Naive thymus-derived CD4-positive, alpha-beta T cell (primary cell): ENCODE measurements at regions of chr14 and their contacts with region 1.

Region 1: GRCh38 chr14:50830932-50831725 is at the start of gene NIN:
- DNase-seq: peak; percentile 58 to 80 (median 74)
- ATAC-seq: peak; percentile 91
- H3K4me3 ChIP-seq: peak within 1 kb of the TSS; percentile 80
- H3K4me3 Mint-ChIP-seq: peak within 1 kb of the TSS; percentile 91 to 99 (median 96)
- H3K27ac ChIP-seq: peak within 1 kb of the TSS; percentile 84
- H3K27ac Mint-ChIP-seq: peak within 1 kb of the TSS; percentile 85 to 99 (median 95)
- H3K4me1 ChIP-seq: peaks cover 40 to 42% of the 10 kb centered on the region in 2 donors
- H3K4me1 Mint-ChIP-seq: peaks cover 46 to 84% (median 74%) of the 10 kb centered on the region in 7 donors
- H3K27me3 ChIP-seq: no peaks in the 10 kb centered on the region
- H3K27me3 Mint-ChIP-seq: peaks cover 0 to 13% (median 0%) of the 10 kb centered on the region in 5 donors
- total RNA-seq, gene NIN: 84.5 to 149 (median 128) TPM

Region 2: DNA sequence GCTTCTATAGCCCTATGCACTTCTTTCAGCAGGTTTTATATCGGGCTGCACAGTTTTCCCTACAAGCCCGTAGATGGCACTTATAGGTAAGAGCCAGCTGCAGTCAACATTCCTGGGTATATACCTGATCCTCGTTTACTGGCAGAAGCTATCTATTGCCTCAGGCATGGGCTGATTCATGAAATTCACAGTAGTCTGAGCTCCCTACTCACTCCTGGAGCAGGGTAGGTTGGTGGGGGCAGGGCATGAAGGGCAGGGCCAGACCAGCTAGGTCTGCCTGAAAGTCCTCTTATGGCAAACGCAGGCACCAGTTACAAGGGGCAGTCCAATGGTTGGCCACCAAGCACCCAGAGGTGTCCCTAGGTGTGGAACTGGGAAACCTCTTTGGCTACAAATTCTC is 1590.7 kb before region 1 on chr14:
- CTCF ChIA-PET with region 1: no interaction called
- POLR2A ChIA-PET with region 1: no interaction called
- intact Hi-C with region 1: no loop called
- DNase-seq: no peak
- ATAC-seq: no peak
- H3K4me3 ChIP-seq: no peak overlapping the region
- H3K4me3 Mint-ChIP-seq: no peak overlapping the region
- H3K27ac ChIP-seq: no peak overlapping the region
- H3K27ac Mint-ChIP-seq: no peak overlapping the region
- H3K4me1 ChIP-seq: no peaks in the 10 kb centered on the region
- H3K4me1 Mint-ChIP-seq: no peaks in the 10 kb centered on the region
- H3K27me3 ChIP-seq: no peaks in the 10 kb centered on the region
- H3K27me3 Mint-ChIP-seq: peaks cover 0 to 25% (median 10%) of the 10 kb centered on the region in 5 donors

Region 3: DNA sequence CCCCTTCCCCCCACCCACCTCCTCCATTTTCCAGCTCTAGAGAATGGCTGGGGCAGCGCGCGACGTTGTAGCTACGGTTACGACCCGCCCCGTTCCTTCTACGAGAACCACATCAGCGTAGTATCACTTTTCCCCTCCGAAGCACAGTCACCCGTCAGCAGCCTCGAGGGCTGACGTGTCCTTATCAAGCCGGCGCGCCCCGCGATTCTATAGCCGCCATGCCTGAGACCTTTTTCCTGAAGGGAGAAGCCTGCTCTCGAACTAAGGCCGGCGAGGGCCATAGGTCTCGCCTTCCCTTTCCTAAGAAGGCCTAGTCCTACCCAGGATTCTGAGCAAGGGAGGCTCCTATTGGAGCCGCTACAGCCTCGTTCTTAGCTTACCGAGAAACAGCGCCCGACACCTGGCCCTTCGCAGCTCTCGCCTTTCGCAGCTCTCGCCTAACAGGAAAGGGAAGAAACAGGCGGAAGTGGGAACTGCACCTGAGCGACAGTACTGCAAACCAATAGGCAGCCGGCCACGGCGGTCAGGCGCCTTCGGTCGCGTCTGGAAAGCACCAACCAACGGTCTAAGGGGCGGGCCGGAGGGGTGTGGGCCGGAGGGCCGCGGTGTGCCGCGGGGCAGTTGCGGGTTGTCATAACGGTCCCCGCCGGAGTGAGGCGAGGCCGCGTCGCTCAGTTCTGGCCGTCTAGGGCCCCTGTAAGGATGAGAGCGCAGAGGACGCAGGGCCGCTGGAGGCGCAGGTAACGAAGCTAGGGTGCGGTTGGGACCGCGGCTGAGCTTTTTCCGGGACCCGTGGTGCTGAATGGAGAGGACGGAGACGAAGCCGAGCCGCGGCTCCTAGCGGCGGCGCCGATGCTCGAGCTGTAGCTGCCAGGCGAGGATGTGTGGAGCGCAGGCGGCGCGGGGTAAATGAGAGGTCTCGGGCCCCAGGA is 1210.7 kb before region 1 on chr14 and contains the starts of genes MGAT2 and RPL36AL:
- CTCF ChIA-PET with region 1: no interaction called
- POLR2A ChIA-PET with region 1: no interaction called
- intact Hi-C with region 1: loop called (anchors 5 kb)
- DNase-seq: peak; percentile 89 to 95 (median 94)
- ATAC-seq: peak; percentile 92
- H3K4me3 ChIP-seq: peak within 1 kb of the TSS; percentile 98
- H3K4me3 Mint-ChIP-seq: peak within 1 kb of the TSS; percentile 94 to 99 (median 98)
- H3K27ac ChIP-seq: peak within 1 kb of the TSS; percentile 97
- H3K27ac Mint-ChIP-seq: peak within 1 kb of the TSS; percentile 95 to 100 (median 99)
- H3K4me1 ChIP-seq: peaks cover 40 to 42% of the 10 kb centered on the region in 2 donors
- H3K4me1 Mint-ChIP-seq: peaks cover 36 to 75% (median 56%) of the 10 kb centered on the region in 7 donors
- H3K27me3 ChIP-seq: no peaks in the 10 kb centered on the region
- H3K27me3 Mint-ChIP-seq: no peaks in the 10 kb centered on the region
- total RNA-seq, gene MGAT2: 16.8 to 69.3 (median 35.1) TPM
- total RNA-seq, gene RPL36AL: 177 to 429 (median 281) TPM

Region 4: DNA sequence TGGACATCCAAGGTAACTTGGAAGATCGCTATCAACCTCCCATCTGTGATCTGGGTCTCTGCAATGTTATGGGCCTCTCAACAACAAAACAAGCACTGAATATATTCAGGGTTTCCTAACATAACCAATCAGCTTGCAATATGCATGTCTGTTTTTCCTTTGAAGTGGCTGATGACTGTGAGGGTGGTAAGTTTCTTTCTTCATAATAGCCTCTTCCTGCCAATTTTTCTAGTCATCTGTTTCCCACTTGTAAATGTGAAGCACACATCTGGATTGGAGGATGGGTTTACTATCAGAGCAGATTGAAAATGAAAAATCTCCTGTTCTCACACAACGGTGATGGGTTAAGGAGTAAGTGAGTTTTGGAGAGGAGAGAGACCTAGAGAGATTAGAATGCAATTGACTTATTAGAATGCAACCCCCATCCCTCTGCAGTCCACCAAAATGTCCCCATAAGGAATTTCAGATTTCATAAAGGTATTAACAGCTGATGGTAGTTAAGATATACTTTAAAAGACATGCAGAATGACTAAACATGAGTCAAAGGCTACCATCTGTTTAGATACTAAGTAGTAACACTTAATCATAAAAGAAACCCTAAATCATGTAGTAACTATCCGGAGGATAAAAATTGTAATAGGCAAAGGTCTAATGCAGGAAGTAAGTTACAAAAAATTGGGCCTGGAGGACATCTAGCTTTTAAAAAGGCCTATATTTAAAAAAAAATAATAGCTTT is 104.6 kb before region 1 on chr14:
- CTCF ChIA-PET with region 1: no interaction called
- POLR2A ChIA-PET with region 1: no interaction called
- intact Hi-C with region 1: loop called in 1 of 2 experiments (anchors 2 kb)
- DNase-seq: peak in 5 of 9 donors; percentile 16 to 50 (median 37)
- ATAC-seq: peak; percentile 66
- H3K4me3 ChIP-seq: no peak overlapping the region
- H3K4me3 Mint-ChIP-seq: peak overlapping the region in 7 of 10 donors; percentile 0 to 87 (median 26)
- H3K27ac ChIP-seq: peak overlapping the region; percentile 32
- H3K27ac Mint-ChIP-seq: peak overlapping the region; percentile 57 to 97 (median 79)
- H3K4me1 ChIP-seq: peaks cover 10 to 19% of the 10 kb centered on the region in 2 donors
- H3K4me1 Mint-ChIP-seq: peaks cover 11 to 39% (median 29%) of the 10 kb centered on the region in 7 donors
- H3K27me3 ChIP-seq: no peaks in the 10 kb centered on the region
- H3K27me3 Mint-ChIP-seq: no peaks in the 10 kb centered on the region

Region 5: DNA sequence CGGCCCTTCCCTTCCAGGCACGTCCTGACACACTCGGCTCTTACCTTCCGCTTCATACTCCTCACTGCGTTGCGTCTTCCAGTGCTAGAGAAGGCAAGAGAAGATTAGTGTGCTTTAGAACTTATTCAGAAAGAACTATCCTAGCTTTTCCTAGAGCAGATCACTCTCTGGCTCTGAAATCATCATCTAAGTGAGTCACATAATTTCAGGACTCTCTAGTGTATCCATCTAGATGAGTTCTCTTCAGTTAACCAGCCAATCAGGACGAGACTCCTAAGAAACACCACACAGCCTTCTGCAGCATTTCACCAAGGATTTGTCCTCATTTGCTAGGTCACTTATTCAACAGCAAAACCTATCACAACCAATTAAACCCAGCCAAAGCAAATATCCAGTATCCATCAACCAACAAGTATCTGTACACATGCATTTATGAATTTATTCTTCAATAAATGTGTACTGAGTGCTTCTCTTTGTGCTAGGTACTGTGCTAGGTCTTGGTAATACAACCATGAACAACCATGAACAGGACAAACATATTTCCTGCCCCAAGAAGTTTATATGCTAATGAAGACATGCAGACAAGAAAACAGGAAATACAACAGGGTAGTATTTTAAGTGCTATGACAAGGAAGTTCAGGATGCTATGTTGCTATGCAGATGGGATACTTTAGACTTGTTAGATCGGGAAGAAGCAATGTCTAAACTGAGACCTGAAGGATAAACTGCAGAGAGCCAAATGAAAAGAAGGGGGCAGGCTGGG is 52.2 kb before region 1 on chr14:
- CTCF ChIA-PET with region 1: interaction called, 12 read pairs
- POLR2A ChIA-PET with region 1: interaction called, 47 read pairs
- intact Hi-C with region 1: loop called (anchors 1 to 2 kb)
- DNase-seq: no peak
- ATAC-seq: no peak
- H3K4me3 ChIP-seq: no peak overlapping the region
- H3K4me3 Mint-ChIP-seq: peak overlapping the region in 4 of 10 donors; percentile 39 to 63 (median 50)
- H3K27ac ChIP-seq: no peak overlapping the region
- H3K27ac Mint-ChIP-seq: peak overlapping the region in 8 of 9 donors; percentile 61 to 97 (median 88)
- H3K4me1 ChIP-seq: peaks cover 31 to 32% of the 10 kb centered on the region in 2 donors
- H3K4me1 Mint-ChIP-seq: peaks cover 26 to 76% (median 66%) of the 10 kb centered on the region in 7 donors
- H3K27me3 ChIP-seq: no peaks in the 10 kb centered on the region
- H3K27me3 Mint-ChIP-seq: no peaks in the 10 kb centered on the region

Region 6: DNA sequence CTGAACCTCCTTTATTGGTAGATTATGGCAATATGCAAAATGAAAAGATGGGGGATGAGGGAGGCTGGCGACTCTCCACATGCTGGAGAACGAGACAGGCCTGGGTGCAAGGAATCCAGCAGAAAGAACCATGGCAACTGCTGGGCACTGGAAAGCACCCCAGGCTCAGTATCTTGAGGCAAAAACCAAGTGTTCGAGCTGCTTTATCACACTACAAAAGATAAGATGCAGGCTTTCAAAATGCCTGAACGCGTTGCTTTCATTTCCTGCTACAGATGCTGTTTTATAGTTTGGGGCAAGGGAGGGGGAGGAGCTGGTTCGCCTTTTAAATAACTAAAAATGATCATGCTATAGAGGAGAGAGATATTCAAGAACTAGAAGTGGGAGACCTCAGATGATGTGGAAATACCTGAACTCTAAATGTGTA is 39.1 kb before region 1 on chr14:
- CTCF ChIA-PET with region 1: interaction called, 12 read pairs
- POLR2A ChIA-PET with region 1: interaction called, 47 read pairs
- intact Hi-C with region 1: loop called in 1 of 2 experiments (anchors 1 kb)
- DNase-seq: peak in 7 of 9 donors; percentile 35 to 56 (median 41)
- ATAC-seq: peak; percentile 72
- H3K4me3 ChIP-seq: peak overlapping the region; percentile 56
- H3K4me3 Mint-ChIP-seq: peak overlapping the region; percentile 67 to 89 (median 82)
- H3K27ac ChIP-seq: peak overlapping the region; percentile 71
- H3K27ac Mint-ChIP-seq: peak overlapping the region; percentile 91 to 99 (median 96)
- H3K4me1 ChIP-seq: peaks cover 53 to 69% of the 10 kb centered on the region in 2 donors
- H3K4me1 Mint-ChIP-seq: peaks cover 42 to 100% (median 91%) of the 10 kb centered on the region in 7 donors
- H3K27me3 ChIP-seq: no peaks in the 10 kb centered on the region
- H3K27me3 Mint-ChIP-seq: no peaks in the 10 kb centered on the region

Region 7: DNA sequence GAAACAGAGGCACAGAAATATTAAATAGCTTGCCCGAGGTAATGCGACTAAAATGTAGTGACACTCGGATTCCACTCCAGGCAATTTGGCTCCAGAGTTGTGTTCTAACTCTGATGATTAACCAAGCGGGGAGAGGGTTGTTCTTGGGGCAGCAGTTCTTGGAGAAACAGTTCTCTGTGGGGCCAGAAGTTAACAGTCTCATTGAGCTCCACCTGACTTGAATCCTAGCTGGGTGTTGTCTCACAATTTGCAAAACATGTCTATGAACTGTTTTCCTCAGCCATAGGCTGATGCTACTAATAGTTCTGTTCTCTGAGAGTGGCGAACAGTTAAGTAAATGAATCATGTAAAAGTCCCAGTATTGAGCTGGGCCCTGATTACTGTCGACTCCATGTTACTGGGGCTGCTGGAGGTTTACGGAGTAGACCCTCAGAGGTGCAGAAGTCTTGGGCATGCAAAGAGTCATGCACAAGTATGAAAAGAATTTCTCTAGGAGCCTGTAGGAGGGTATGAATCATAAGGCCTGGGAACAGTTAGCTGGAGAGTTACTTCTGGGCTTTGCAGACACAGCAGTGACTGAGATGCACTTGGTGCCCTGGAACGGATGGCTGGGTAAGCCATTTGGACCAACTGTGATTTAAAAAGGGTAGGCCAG is 15.2 kb after region 1 on chr14:
- CTCF ChIA-PET with region 1: no interaction called
- POLR2A ChIA-PET with region 1: interaction called, 4 read pairs
- intact Hi-C with region 1: loop called in 1 of 2 experiments (anchors 1 kb)
- DNase-seq: no peak
- ATAC-seq: no peak
- H3K4me3 ChIP-seq: no peak overlapping the region
- H3K4me3 Mint-ChIP-seq: no peak overlapping the region
- H3K27ac ChIP-seq: no peak overlapping the region
- H3K27ac Mint-ChIP-seq: no peak overlapping the region
- H3K4me1 ChIP-seq: no peaks in the 10 kb centered on the region
- H3K4me1 Mint-ChIP-seq: peaks cover 0 to 14% (median 9%) of the 10 kb centered on the region in 7 donors
- H3K27me3 ChIP-seq: no peaks in the 10 kb centered on the region
- H3K27me3 Mint-ChIP-seq: peaks cover 0 to 21% (median 0%) of the 10 kb centered on the region in 5 donors